ENCODE measurements at regions of chr13 and their contacts with region 1.

Region 1: DNA sequence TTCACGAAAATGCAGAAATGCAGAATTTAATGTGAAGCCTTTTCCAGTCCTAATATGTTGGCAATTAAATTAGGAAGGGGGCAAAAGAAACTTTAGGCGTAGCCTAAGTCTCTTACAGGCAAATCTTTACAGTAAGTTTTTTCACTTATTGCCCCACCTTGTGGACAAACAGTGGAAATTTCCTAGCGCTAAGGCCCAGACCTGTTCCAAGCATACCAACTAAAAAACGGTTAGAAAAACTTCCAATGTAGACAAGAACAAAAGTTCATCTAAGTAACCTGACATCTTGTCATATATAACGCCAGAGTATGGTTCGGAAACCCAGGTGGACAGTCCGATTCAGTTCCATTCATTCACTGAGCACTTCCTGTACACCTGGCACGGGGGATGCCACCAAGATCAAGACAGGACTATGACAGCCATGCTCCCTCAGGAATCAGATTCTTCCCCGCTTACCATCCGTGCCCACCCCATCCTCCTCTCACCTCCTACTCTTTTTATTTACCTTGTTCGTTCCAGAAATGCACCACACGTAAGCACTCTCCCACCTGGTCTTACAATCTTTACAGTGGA is 4.9 kb downstream of the ZAR1L start:
- DNase-seq: peak; percentile 32
- ATAC-seq: peak; percentile 92
- H3K4me3 ChIP-seq: no peak overlapping the region
- H3K27ac ChIP-seq: no peak overlapping the region
- H3K4me1 ChIP-seq: peaks cover 5% of the 10 kb centered on the region; the same call in 1 of the 2 replicates
- H3K27me3 ChIP-seq: no peaks in the 10 kb centered on the region
- CTCF ChIP-seq: peak; percentile 70

Region 2: GRCh38 chr13:31909864-31910551 is 400.2 kb before region 1 on chr13:
- CTCF ChIA-PET with region 1: interaction called, 3 read pairs
- POLR2A ChIA-PET with region 1: interaction called, 10 read pairs
- in situ Hi-C with region 1: no loop called
- intact Hi-C with region 1: loop called (anchors 5 kb)
- DNase-seq: peak; percentile 20
- ATAC-seq: no peak
- H3K4me3 ChIP-seq: no peak overlapping the region
- H3K27ac ChIP-seq: no peak overlapping the region
- H3K4me1 ChIP-seq: no peaks in the 10 kb centered on the region
- H3K27me3 ChIP-seq: no peaks in the 10 kb centered on the region; the same call in 1 of the 2 replicates
- CTCF ChIP-seq: peak; percentile 74; the same call in 1 of the 2 replicates

Region 3: GRCh38 chr13:32243695-32244094 is 66.5 kb before region 1 on chr13:
- CTCF ChIA-PET with region 1: no interaction called
- POLR2A ChIA-PET with region 1: no interaction called
- in situ Hi-C with region 1: no loop called
- intact Hi-C with region 1: loop called (anchors 5 kb)
- DNase-seq: no peak
- ATAC-seq: no peak
- H3K4me3 ChIP-seq: no peak overlapping the region
- H3K27ac ChIP-seq: no peak overlapping the region
- H3K4me1 ChIP-seq: no peaks in the 10 kb centered on the region
- H3K27me3 ChIP-seq: no peaks in the 10 kb centered on the region
- CTCF ChIP-seq: no peak

Region 4: GRCh38 chr13:32391069-32391617 is 80.9 kb after region 1 on chr13:
- CTCF ChIA-PET with region 1: no interaction called
- POLR2A ChIA-PET with region 1: no interaction called
- in situ Hi-C with region 1: no loop called
- intact Hi-C with region 1: no loop called
- DNase-seq: no peak
- ATAC-seq: no peak
- H3K4me3 ChIP-seq: no peak overlapping the region
- H3K27ac ChIP-seq: no peak overlapping the region
- H3K4me1 ChIP-seq: no peaks in the 10 kb centered on the region
- H3K27me3 ChIP-seq: no peaks in the 10 kb centered on the region
- CTCF ChIP-seq: no peak

Measured in Panc1 (cell line).